GM12878 (cell line): ENCODE measurements at regions of chr3 and their contacts with region 1.

Region 1: DNA sequence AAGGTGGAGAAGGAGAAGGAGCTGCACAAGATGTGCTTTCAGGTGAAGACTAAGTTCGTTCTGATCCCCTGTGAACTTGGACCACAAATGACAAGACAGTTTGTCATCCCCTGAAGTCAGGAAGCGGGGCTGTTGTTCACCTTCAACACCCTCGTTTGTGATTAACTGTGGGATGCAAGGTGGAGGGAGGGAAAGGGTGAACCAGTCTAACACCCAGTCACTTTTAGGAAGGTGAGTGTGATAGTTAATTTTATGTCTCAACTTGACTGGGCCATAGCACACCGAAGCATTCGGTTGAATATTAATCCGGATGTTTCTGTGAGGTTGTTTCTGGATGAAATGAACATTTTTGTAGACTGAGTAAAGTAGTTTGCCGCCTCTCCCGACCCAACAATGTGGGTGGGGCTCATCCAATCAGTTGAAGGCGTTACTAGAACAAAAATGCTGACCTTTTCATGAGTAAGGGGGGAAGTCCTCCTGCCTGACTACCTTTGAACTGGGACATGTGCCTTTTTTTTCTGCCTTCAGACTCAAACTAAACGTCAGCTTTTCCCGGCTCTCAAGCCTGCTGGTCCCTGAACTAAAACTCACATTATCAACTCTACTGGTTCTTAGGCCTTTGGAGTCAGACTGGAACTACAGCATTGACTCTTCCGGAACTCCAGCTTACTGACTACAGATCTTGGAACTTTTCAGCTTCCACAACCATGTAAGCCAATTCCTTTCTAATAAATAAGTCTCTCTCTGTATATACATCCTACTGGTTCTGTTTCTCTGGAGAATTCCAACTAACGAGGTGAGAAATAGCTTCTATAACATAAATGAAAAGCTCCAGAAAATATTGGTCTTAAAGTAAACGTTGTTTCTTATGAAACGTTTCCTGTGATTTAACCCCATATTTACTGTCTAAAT is 264.0 kb upstream of the SLITRK3 start:
- DNase-seq: no peak
- ATAC-seq: peak; percentile 32
- H3K4me3 ChIP-seq: no peak overlapping the region
- H3K27ac ChIP-seq: no peak overlapping the region
- H3K4me1 ChIP-seq: no peaks in the 10 kb centered on the region
- H3K27me3 ChIP-seq: no peaks in the 10 kb centered on the region
- CTCF ChIP-seq: no peak
- EP300 ChIP-seq: no peak
- POLR2A ChIP-seq: no peak
- RAD21 ChIP-seq: no peak

Region 2: DNA sequence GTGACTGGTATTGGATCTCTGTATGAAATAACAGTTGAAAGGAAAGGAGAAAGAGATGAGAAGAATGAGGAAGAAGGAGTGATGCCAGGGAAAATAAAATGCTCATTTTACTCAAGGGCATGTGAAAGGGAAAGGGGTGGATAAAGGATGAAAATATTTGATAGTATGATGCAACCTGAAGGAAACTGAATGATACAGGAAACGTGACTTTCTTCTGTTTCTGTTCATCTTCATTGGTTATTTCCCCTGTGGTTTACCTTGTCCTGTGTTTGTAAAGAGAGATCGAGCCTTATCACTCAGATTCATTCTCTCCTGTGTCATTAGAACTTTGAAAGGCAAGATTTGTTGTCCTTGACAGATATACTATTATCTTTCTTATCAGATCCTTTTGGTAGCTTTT is 20.4 kb before region 1 on chr3:
- CTCF ChIA-PET with region 1: interaction called, 3 read pairs
- POLR2A ChIA-PET with region 1: interaction called, 3 read pairs
- RAD21 ChIA-PET with region 1: interaction called, 17 read pairs
- SMC1A ChIA-PET with region 1: interaction called, 9 read pairs
- in situ Hi-C with region 1: no loop called
- intact Hi-C with region 1: no loop called
- DNase-seq: peak; percentile 7
- ATAC-seq: peak; percentile 82
- H3K4me3 ChIP-seq: no peak overlapping the region
- H3K27ac ChIP-seq: peak overlapping the region; percentile 61
- H3K4me1 ChIP-seq: no peaks in the 10 kb centered on the region
- H3K27me3 ChIP-seq: no peaks in the 10 kb centered on the region
- CTCF ChIP-seq: no peak
- EP300 ChIP-seq: no peak
- POLR2A ChIP-seq: no peak
- RAD21 ChIP-seq: no peak

Region 3: DNA sequence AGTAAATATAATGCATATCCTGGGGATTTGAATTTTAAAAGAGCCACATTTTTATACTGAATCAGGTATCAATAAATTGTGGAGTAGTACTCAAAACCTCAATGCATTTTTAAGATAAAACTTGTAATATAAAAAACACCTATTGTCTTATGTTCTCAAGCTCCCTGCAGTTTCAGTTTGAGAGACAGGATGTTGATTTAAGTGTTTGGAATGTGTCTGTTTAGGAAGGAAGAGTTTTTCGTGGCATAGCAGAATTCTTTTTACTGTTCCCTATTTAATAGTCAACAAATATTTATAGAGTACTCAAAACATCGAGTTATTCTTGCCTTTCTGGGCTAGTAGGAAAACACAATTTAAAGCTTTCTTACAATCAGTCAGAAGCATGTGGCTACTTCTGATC is 523.1 kb after region 1 on chr3:
- CTCF ChIA-PET with region 1: no interaction called
- POLR2A ChIA-PET with region 1: no interaction called
- RAD21 ChIA-PET with region 1: no interaction called
- SMC1A ChIA-PET with region 1: no interaction called
- in situ Hi-C with region 1: no loop called
- intact Hi-C with region 1: no loop called
- DNase-seq: no peak
- ATAC-seq: no peak
- H3K4me3 ChIP-seq: no peak overlapping the region
- H3K27ac ChIP-seq: no peak overlapping the region
- H3K4me1 ChIP-seq: no peaks in the 10 kb centered on the region
- H3K27me3 ChIP-seq: no peaks in the 10 kb centered on the region
- CTCF ChIP-seq: no peak
- EP300 ChIP-seq: no peak
- POLR2A ChIP-seq: no peak
- RAD21 ChIP-seq: no peak